ENCODE measurements at regions of chr2 and their contacts with region 1.

Region 1: DNA sequence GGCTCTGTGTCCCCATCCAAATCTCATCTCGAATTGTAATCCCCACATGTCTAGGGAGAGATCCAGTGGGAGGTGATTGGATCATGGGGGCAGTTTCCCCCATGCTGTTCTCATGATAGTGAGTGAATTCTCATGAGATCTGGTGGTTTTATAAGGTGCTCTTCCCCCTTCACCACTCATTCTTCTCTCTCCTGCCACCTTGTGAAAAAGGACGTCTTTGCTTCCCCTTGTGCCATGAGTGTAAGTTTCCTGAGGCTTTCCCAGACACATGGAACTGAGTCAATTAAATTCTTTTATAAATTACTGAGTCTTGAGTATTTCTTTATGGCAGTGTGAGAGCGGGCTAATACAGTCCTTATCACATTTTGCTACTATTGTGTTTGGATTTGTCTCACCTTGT is 177.6 kb upstream of the SLC39A10 start:
- DNase-seq: no peak
- ATAC-seq: no peak
- H3K4me3 ChIP-seq: no peak overlapping the region
- H3K27ac ChIP-seq: no peak overlapping the region
- H3K4me1 ChIP-seq: no peaks in the 10 kb centered on the region
- H3K27me3 ChIP-seq: no peaks in the 10 kb centered on the region
- CTCF ChIP-seq: no peak
- POLR2A ChIP-seq: no peak
- RAD21 ChIP-seq: no peak

Region 2: DNA sequence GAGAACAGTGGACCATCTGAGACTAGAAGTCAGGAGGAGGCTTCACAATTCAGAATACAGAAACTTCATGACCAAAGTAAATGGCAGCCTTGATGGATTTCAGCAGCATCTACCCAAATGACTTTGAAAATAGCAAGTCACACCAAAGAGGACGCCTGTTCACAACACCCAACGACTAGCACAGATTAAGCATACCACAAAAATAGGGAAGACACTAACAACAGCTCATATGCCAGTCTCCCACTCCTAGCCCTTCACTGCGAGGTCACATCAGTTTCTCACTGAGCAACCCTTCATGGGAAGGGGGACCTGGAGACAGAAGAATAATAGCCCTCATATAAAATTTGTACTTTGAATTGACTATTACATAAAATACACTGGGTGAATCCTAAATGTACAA is 50.7 kb before region 1 on chr2:
- CTCF ChIA-PET with region 1: no interaction called
- POLR2A ChIA-PET with region 1: no interaction called
- RAD21 ChIA-PET with region 1: no interaction called
- intact Hi-C with region 1: loop called (anchors 1 kb)
- DNase-seq: no peak
- ATAC-seq: no peak
- H3K4me3 ChIP-seq: no peak overlapping the region
- H3K27ac ChIP-seq: no peak overlapping the region
- H3K4me1 ChIP-seq: no peaks in the 10 kb centered on the region
- H3K27me3 ChIP-seq: no peaks in the 10 kb centered on the region
- CTCF ChIP-seq: no peak
- POLR2A ChIP-seq: no peak
- RAD21 ChIP-seq: no peak

Region 3: DNA sequence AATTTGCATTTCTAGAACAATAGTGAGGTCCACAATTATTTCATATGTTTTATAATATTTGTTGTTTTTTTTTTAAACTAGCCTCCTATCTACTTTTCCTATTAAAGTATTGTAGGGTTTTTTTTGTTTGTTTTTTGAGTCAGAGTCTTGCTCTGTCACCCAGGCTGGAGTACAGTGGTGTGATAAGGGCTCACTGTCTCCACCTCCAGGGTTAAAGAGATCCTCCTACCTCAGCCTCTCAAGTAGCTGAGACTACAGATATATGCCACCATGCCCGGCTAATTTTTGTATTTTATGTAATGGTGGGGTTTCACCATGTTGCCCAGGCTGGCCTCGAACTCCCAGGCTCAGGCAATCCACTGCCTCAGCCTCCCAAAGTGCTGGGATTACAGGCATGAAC is 300.1 kb after region 1 on chr2:
- CTCF ChIA-PET with region 1: no interaction called
- POLR2A ChIA-PET with region 1: no interaction called
- RAD21 ChIA-PET with region 1: no interaction called
- intact Hi-C with region 1: no loop called
- DNase-seq: no peak
- ATAC-seq: peak; percentile 90
- H3K4me3 ChIP-seq: no peak overlapping the region
- H3K27ac ChIP-seq: no peak overlapping the region
- H3K4me1 ChIP-seq: no peaks in the 10 kb centered on the region
- H3K27me3 ChIP-seq: no peaks in the 10 kb centered on the region
- CTCF ChIP-seq: no peak
- POLR2A ChIP-seq: no peak
- RAD21 ChIP-seq: no peak

Region 4: DNA sequence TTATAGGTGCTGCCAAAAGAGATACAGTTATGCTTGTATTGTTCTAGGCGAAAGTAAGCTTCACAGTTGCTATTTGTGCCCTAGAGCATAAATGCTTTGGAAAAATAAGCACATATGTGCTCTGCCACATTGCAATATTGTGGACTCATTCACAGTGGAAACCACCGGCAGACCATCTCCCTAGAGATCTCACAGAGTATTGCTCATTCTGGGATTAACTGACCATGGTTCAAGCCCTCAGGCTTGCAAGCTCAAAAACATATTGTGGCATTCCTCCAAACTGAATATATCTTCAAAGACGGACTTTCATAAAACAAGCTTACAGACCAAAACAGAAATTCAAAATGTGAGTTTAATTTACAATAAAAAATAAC is 1001.9 kb after region 1 on chr2:
- CTCF ChIA-PET with region 1: no interaction called
- POLR2A ChIA-PET with region 1: no interaction called
- RAD21 ChIA-PET with region 1: no interaction called
- intact Hi-C with region 1: no loop called
- DNase-seq: no peak
- ATAC-seq: no peak
- H3K4me3 ChIP-seq: no peak overlapping the region
- H3K27ac ChIP-seq: no peak overlapping the region
- H3K4me1 ChIP-seq: no peaks in the 10 kb centered on the region
- H3K27me3 ChIP-seq: no peaks in the 10 kb centered on the region
- CTCF ChIP-seq: no peak
- POLR2A ChIP-seq: no peak
- RAD21 ChIP-seq: no peak

Region 5: DNA sequence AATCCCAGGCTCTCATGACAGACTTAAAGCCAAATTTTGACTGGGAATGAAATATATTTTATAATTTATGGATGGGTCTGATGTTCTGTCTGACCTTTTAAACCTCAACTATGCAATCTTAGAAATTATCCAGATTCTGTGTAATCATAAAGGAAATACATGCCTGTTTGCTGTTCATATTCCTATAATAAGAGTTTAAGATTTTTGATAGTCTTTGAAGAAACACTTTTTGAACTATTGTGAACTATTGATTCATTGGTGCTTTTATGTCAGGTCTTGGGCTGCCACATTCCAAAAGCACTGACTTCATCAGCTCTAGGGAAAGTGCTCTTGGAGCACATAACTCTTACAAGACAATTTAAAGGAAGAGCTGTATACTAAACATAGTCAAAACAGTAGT is 1224.3 kb after region 1 on chr2:
- CTCF ChIA-PET with region 1: no interaction called
- POLR2A ChIA-PET with region 1: no interaction called
- RAD21 ChIA-PET with region 1: no interaction called
- intact Hi-C with region 1: no loop called
- DNase-seq: no peak
- ATAC-seq: no peak
- H3K4me3 ChIP-seq: no peak overlapping the region
- H3K27ac ChIP-seq: no peak overlapping the region
- H3K4me1 ChIP-seq: peaks cover 0 to 5% of the 10 kb centered on the region in 2 experiments; a peak in 2 of 4 replicates
- H3K27me3 ChIP-seq: no peaks in the 10 kb centered on the region
- CTCF ChIP-seq: no peak
- POLR2A ChIP-seq: no peak
- RAD21 ChIP-seq: no peak